B cell (primary cell): ENCODE measurements at regions of chr21 and their contacts with region 1.

Region 1: GRCh38 chr21:41283211-41283818 is 33.3 kb upstream of the FAM3B start:
- DNase-seq: peak; percentile 77
- ATAC-seq: peak; percentile 81
- H3K4me3 ChIP-seq: no peak overlapping the region
- H3K4me3 Mint-ChIP-seq: no peak overlapping the region
- H3K27ac ChIP-seq: no peak overlapping the region
- H3K27ac Mint-ChIP-seq: no peak overlapping the region
- H3K4me1 ChIP-seq: peaks cover 0 to 4% of the 10 kb centered on the region in 2 donors
- H3K4me1 Mint-ChIP-seq: peaks cover 2% of the 10 kb centered on the region
- H3K27me3 ChIP-seq: peaks cover 0 to 2% (median 0%) of the 10 kb centered on the region in 4 experiments
- H3K27me3 Mint-ChIP-seq: peaks cover 7% of the 10 kb centered on the region
- CTCF ChIP-seq: peak; percentile 93

Region 2: GRCh38 chr21:41102281-41102680 is 181.0 kb before region 1 on chr21:
- CTCF ChIA-PET with region 1: no interaction called
- POLR2A ChIA-PET with region 1: no interaction called
- intact Hi-C with region 1: no loop called
- DNase-seq: no peak
- ATAC-seq: no peak
- H3K4me3 ChIP-seq: no peak overlapping the region
- H3K4me3 Mint-ChIP-seq: no peak overlapping the region
- H3K27ac ChIP-seq: no peak overlapping the region
- H3K27ac Mint-ChIP-seq: no peak overlapping the region
- H3K4me1 ChIP-seq: no peaks in the 10 kb centered on the region
- H3K4me1 Mint-ChIP-seq: no peaks in the 10 kb centered on the region
- H3K27me3 ChIP-seq: peaks cover 0 to 14% (median 5%) of the 10 kb centered on the region in 4 experiments
- H3K27me3 Mint-ChIP-seq: peaks cover 25% of the 10 kb centered on the region
- CTCF ChIP-seq: no peak

Region 3: DNA sequence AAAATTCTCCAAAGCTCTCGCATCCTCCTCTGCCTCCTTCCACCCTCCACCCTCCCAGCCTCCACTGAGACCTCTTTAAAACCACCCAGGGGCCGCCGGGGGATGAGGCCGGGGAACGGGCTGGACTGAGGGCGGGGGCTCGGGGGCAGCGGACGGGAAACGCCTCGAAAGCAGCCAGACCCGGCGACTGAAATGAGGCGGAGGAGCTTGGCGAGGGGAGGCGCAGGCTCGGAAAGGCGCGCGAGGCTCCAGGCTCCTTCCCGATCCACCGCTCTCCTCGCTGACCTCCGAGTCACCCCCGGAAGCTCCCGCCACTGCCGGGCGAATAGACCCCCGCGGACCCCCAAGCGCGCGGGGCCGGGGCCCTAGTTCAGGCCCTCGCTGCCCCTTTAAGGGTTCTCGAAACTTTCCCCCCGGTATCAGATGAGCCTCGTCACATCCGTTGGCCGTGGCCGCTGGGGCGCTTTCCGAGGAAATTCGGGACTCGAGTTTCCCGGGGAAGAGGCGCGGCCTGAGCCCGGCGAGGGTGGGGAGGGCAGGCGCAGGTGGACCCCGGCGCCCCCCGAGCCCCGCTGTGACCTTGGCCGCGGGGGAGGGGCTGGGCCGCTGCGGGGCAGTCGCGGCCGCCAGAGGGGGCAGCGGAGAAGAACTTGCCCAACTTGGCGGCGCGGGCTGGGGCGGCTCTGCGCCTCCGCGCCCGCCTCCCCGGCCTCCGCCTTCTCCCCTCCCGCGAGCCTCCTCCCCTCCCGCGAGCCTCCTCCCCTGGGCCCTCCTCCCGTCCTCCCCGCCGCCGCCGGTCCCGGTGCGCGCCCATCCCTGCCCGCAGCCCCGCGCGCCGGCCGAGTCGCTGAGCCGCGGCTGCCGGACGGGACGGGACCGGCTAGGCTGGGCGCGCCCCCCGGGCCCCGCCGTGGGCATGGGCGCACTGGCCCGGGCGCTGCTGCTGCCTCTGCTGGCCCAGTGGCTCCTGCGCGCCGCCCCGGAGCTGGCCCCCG is 115.7 kb before region 1 on chr21 and contains the start of gene BACE2:
- CTCF ChIA-PET with region 1: interaction called, 50 read pairs
- POLR2A ChIA-PET with region 1: no interaction called
- intact Hi-C with region 1: no loop called
- DNase-seq: peak; percentile 85
- ATAC-seq: peak; percentile 87
- H3K4me3 ChIP-seq: peak within 1 kb of the TSS in 4 of 5 experiments; percentile 66 to 87 (median 75)
- H3K4me3 Mint-ChIP-seq: peak within 1 kb of the TSS; percentile 93
- H3K27ac ChIP-seq: peak within 1 kb of the TSS in 1 of 2 donors; percentile 67
- H3K27ac Mint-ChIP-seq: peak within 1 kb of the TSS; percentile 87
- H3K4me1 ChIP-seq: peaks cover 17 to 19% of the 10 kb centered on the region in 2 donors
- H3K4me1 Mint-ChIP-seq: peaks cover 26% of the 10 kb centered on the region
- H3K27me3 ChIP-seq: no peaks in the 10 kb centered on the region
- H3K27me3 Mint-ChIP-seq: peaks cover 8% of the 10 kb centered on the region
- CTCF ChIP-seq: peak; percentile 73
- total RNA-seq, gene BACE2: 14.3 and 18.4 TPM in 2 replicates

Region 4: DNA sequence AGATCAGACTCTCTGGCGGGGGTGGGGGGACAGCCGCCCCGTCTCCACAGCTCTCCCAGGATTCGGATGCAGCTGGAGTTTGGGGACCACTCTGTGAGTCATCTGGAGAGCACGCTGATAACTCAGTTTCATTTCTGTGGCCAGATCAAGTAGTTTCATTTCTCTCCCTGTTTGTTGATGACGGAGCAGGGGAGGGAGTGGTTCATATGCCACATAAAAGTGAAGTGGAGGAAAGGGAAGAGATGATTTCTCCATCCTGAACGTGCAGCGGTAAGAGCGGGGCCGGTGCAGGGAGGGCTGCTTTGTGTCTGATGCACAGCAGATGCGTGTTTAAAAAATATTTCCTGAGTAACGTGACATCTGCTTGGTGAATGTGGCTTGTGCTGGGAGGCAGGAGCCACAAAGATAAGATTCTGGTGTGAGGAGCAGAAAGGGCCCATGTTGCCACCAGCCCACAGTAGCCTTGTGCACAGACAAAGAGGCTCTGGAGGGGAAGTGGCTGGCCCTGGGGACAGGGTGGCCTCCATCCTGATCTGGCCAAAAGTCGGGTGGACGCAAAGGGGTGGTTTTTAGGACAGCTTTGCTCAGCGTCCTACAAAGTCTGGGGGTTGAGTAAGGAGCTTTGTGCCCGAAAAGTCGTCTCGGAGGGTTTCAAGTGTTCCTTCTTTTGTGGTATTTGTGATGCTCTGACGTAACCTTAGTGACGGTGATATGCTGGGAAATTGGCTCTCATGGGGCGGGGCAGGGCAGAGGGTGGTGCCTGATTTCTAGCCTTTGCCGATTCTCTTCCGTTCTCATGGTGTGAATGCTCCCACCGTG is 78.7 kb after region 1 on chr21 and contains the start of gene MX2:
- CTCF ChIA-PET with region 1: interaction called, 46 read pairs
- POLR2A ChIA-PET with region 1: no interaction called
- intact Hi-C with region 1: loop called (anchors 5 kb)
- DNase-seq: peak; percentile 90
- ATAC-seq: peak; percentile 81
- H3K4me3 ChIP-seq: peak within 1 kb of the TSS; percentile 60 to 79 (median 69)
- H3K4me3 Mint-ChIP-seq: peak within 1 kb of the TSS; percentile 83
- H3K27ac ChIP-seq: peak within 1 kb of the TSS; percentile 94 to 98
- H3K27ac Mint-ChIP-seq: peak within 1 kb of the TSS; percentile 99
- H3K4me1 ChIP-seq: peaks cover 42 to 59% of the 10 kb centered on the region in 2 donors
- H3K4me1 Mint-ChIP-seq: peaks cover 57% of the 10 kb centered on the region
- H3K27me3 ChIP-seq: no peaks in the 10 kb centered on the region
- H3K27me3 Mint-ChIP-seq: no peaks in the 10 kb centered on the region
- CTCF ChIP-seq: no peak
- total RNA-seq, gene MX2: 64.3 and 72.8 TPM in 2 replicates

Region 5: GRCh38 chr21:41411449-41412089 is 128.3 kb after region 1 on chr21:
- CTCF ChIA-PET with region 1: interaction called, 15 read pairs
- POLR2A ChIA-PET with region 1: no interaction called
- intact Hi-C with region 1: no loop called
- DNase-seq: no peak
- ATAC-seq: peak; percentile 39
- H3K4me3 ChIP-seq: no peak overlapping the region
- H3K4me3 Mint-ChIP-seq: no peak overlapping the region
- H3K27ac ChIP-seq: no peak overlapping the region
- H3K27ac Mint-ChIP-seq: no peak overlapping the region
- H3K4me1 ChIP-seq: peaks cover 0 to 7% of the 10 kb centered on the region in 2 donors
- H3K4me1 Mint-ChIP-seq: peaks cover 6% of the 10 kb centered on the region
- H3K27me3 ChIP-seq: no peaks in the 10 kb centered on the region
- H3K27me3 Mint-ChIP-seq: no peaks in the 10 kb centered on the region
- CTCF ChIP-seq: no peak

Region 6: GRCh38 chr21:41425954-41426675 is 142.8 kb after region 1 on chr21 and contains the start of gene MX1:
- CTCF ChIA-PET with region 1: interaction called, 23 read pairs
- POLR2A ChIA-PET with region 1: no interaction called
- intact Hi-C with region 1: loop called (anchors 5 kb)
- DNase-seq: peak; percentile 82
- ATAC-seq: peak; percentile 95
- H3K4me3 ChIP-seq: peak within 1 kb of the TSS; percentile 57 to 93 (median 74)
- H3K4me3 Mint-ChIP-seq: peak within 1 kb of the TSS; percentile 99
- H3K27ac ChIP-seq: peak within 1 kb of the TSS; percentile 69 to 83
- H3K27ac Mint-ChIP-seq: peak within 1 kb of the TSS; percentile 98
- H3K4me1 ChIP-seq: peaks cover 55 to 71% of the 10 kb centered on the region in 2 donors
- H3K4me1 Mint-ChIP-seq: peaks cover 75% of the 10 kb centered on the region
- H3K27me3 ChIP-seq: no peaks in the 10 kb centered on the region
- H3K27me3 Mint-ChIP-seq: no peaks in the 10 kb centered on the region
- CTCF ChIP-seq: no peak
- total RNA-seq, gene MX1: 61.8 and 62.9 TPM in 2 replicates

Region 7: GRCh38 chr21:41451753-41452676 is 168.7 kb after region 1 on chr21:
- CTCF ChIA-PET with region 1: interaction called, 138 read pairs
- POLR2A ChIA-PET with region 1: no interaction called
- intact Hi-C with region 1: no loop called
- DNase-seq: no peak
- ATAC-seq: no peak
- H3K4me3 ChIP-seq: no peak overlapping the region
- H3K4me3 Mint-ChIP-seq: no peak overlapping the region
- H3K27ac ChIP-seq: no peak overlapping the region
- H3K27ac Mint-ChIP-seq: no peak overlapping the region
- H3K4me1 ChIP-seq: no peaks in the 10 kb centered on the region
- H3K4me1 Mint-ChIP-seq: peaks cover 1% of the 10 kb centered on the region
- H3K27me3 ChIP-seq: no peaks in the 10 kb centered on the region
- H3K27me3 Mint-ChIP-seq: no peaks in the 10 kb centered on the region
- CTCF ChIP-seq: no peak

Region 8: GRCh38 chr21:41468871-41469270 is 185.6 kb after region 1 on chr21:
- CTCF ChIA-PET with region 1: interaction called, 30 read pairs
- POLR2A ChIA-PET with region 1: no interaction called
- intact Hi-C with region 1: no loop called
- DNase-seq: no peak
- ATAC-seq: no peak
- H3K4me3 ChIP-seq: no peak overlapping the region
- H3K4me3 Mint-ChIP-seq: no peak overlapping the region
- H3K27ac ChIP-seq: no peak overlapping the region
- H3K27ac Mint-ChIP-seq: no peak overlapping the region
- H3K4me1 ChIP-seq: no peaks in the 10 kb centered on the region
- H3K4me1 Mint-ChIP-seq: no peaks in the 10 kb centered on the region
- H3K27me3 ChIP-seq: peaks cover 0 to 44% (median 8%) of the 10 kb centered on the region in 4 experiments
- H3K27me3 Mint-ChIP-seq: peaks cover 35% of the 10 kb centered on the region
- CTCF ChIP-seq: no peak